Activated CD8-positive, alpha-beta T cell treated with anti-CD3 and anti-CD28 coated beads, Interleukin-2, amount 10 ng/mL, durations not matched to agents 7 days and 5 days (primary cell): ENCODE measurements at regions of chr21 and their contacts with region 1.

Region 1: DNA sequence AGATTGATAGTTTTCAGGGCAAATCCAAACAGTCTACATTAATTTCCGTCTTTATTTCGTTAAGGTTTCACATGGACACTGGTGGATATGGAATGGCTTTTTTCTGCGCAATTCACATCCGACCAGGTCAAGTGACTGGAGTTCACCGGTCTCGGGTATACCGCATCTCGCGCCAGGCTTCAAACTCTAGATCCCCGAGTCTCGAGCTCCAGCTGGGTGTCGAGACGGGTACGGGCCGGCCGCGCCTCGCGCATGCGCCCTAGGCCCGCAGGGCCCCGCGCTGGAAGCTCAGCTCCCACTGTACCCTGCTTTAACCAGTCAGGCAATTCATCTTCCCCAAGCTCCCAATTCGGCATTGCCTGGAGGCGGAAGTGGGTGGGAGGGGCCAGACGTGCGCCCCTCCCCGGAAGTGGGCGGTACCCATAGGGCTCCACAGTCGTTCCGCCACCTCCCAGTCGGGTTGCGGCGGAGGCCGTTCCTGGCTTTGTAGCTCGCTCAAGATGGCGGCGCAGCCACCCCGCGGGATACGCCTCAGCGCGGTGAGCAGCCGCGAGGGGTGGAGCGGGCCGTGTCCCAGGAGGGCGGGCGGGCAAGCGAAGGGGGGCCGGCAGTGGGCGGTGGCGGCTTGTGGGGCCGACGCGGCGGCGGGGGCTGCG is at the start of gene MORC3:
- DNase-seq: peak; percentile 98
- ATAC-seq: peak; percentile 91
- H3K4me3 Mint-ChIP-seq: peak within 1 kb of the TSS; percentile 89
- H3K27ac Mint-ChIP-seq: peak within 1 kb of the TSS; percentile 97
- H3K4me1 Mint-ChIP-seq: peaks cover 30% of the 10 kb centered on the region
- H3K27me3 Mint-ChIP-seq: no peaks in the 10 kb centered on the region
- total RNA-seq, gene MORC3: 31.6 to 35.2 TPM

Region 2: GRCh38 chr21:36156339-36156814 is 163.5 kb before region 1 on chr21:
- CTCF ChIA-PET with region 1: interaction called, 7 read pairs
- POLR2A ChIA-PET with region 1: interaction called, 10 read pairs
- DNase-seq: peak; percentile 100
- ATAC-seq: peak; percentile 90
- H3K4me3 Mint-ChIP-seq: peak overlapping the region; percentile 84
- H3K27ac Mint-ChIP-seq: peak overlapping the region; percentile 52
- H3K4me1 Mint-ChIP-seq: peaks cover 33% of the 10 kb centered on the region
- H3K27me3 Mint-ChIP-seq: no peaks in the 10 kb centered on the region

Region 3: GRCh38 chr21:36260030-36260787 is 59.7 kb before region 1 on chr21:
- CTCF ChIA-PET with region 1: interaction called, 27 read pairs
- POLR2A ChIA-PET with region 1: interaction called, 5 read pairs
- DNase-seq: peak; percentile 72
- ATAC-seq: peak; percentile 87
- H3K4me3 Mint-ChIP-seq: peak overlapping the region; percentile 73
- H3K27ac Mint-ChIP-seq: peak overlapping the region; percentile 91
- H3K4me1 Mint-ChIP-seq: peaks cover 15% of the 10 kb centered on the region
- H3K27me3 Mint-ChIP-seq: no peaks in the 10 kb centered on the region

Region 4: DNA sequence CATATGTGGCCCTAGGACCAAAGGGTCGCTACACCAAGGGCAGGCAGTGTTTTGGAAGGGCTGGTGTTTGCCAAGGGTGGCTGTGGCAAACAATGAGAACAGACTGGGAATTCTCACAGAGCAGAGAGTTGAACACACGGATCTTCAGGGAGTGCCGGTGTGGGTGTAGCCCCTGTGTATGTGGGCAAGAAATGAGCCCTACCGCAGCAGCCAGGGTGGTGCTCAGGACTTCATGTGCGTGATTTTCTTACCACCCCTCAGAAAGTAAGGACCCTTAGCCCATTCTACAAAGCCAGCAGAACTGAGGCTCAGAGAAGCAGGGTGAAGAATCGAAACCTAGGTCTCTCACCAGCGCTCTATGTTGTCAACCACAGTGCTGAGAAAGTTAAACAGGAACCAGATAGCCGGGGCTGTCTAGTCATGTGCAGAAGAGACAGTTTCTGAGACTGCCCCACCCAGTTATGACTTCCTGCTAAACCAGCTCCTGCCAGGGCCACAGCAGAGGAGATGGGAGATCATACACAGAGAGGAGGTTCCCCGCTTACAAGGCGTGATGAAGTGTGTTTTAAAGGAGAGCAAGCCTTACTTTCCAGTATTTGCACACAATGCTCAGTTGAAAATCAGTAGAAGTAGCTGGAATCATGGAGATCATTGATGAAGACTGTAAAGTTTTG is 21.8 kb before region 1 on chr21:
- CTCF ChIA-PET with region 1: interaction called, 33 read pairs
- POLR2A ChIA-PET with region 1: interaction called, 176 read pairs
- DNase-seq: peak; percentile 89
- ATAC-seq: peak; percentile 100
- H3K4me3 Mint-ChIP-seq: peak overlapping the region; percentile 62
- H3K27ac Mint-ChIP-seq: peak overlapping the region; percentile 96
- H3K4me1 Mint-ChIP-seq: peaks cover 37% of the 10 kb centered on the region
- H3K27me3 Mint-ChIP-seq: no peaks in the 10 kb centered on the region